GM12878 (cell line): ENCODE measurements at regions of chr16 and their contacts with region 1.

Region 1: DNA sequence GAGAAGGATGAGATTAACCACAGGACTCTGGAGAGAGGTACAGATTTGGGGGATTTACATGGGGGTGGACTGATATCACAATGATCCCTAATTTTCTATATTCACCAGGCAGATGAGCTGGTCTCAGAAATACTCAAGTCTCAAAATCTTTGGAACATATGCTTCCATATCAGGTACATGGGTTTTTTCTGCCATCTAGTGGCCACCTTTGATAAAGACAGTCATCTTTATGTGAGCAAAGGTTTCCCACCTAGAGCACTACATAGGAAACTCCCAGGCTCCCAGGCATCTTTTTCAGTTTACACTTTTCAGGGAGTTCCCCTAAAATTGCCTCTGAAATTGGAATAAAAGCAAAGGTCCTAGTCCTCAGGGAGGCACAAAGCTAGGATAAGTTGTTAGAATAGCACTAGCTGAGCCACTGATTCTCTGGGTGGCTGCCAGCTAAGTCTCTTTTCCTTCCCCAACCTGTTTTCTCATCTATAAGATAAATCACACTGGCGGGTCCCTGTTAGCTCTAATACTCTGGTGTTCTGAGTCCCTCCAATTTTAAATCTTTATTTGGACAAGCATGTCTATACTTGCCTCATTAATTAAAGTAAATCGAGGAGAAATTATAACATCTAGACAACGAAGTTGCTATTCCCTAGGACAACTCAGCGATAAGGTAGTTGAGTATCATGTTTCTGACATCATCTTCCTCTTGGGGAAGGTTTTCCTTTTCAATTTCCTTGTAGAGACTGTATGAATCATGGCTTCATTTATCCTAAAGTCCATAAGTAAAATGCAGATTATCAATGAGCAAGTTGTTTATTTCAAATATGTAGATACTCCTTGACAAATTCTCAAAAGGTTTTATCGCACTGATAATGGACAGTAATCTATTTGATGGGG is 19.0 kb upstream of the MON1B start:
- DNase-seq: no peak
- ATAC-seq: peak; percentile 89
- H3K4me3 ChIP-seq: no peak overlapping the region
- H3K27ac ChIP-seq: no peak overlapping the region
- H3K4me1 ChIP-seq: no peaks in the 10 kb centered on the region
- H3K27me3 ChIP-seq: no peaks in the 10 kb centered on the region
- CTCF ChIP-seq: peak; percentile 54 to 71 (median 68)
- EP300 ChIP-seq: no peak
- POLR2A ChIP-seq: no peak
- RAD21 ChIP-seq: peak; percentile 81

Region 2: GRCh38 chr16:76278980-76279379 is 893.0 kb before region 1 on chr16:
- CTCF ChIA-PET with region 1: interaction called, 21 read pairs
- POLR2A ChIA-PET with region 1: no interaction called
- RAD21 ChIA-PET with region 1: interaction called, 4 read pairs
- SMC1A ChIA-PET with region 1: interaction called, 8 read pairs
- in situ Hi-C with region 1: no loop called
- intact Hi-C with region 1: loop called (anchors 10 kb)
- DNase-seq: no peak
- ATAC-seq: peak; percentile 77
- H3K4me3 ChIP-seq: no peak overlapping the region
- H3K27ac ChIP-seq: no peak overlapping the region
- H3K4me1 ChIP-seq: no peaks in the 10 kb centered on the region
- H3K27me3 ChIP-seq: no peaks in the 10 kb centered on the region
- CTCF ChIP-seq: peak; percentile 25 to 55 (median 31); a peak in 4 of 6 replicates
- EP300 ChIP-seq: no peak
- POLR2A ChIP-seq: no peak
- RAD21 ChIP-seq: peak; percentile 65

Region 3: GRCh38 chr16:76668207-76668725 is 503.7 kb before region 1 on chr16:
- CTCF ChIA-PET with region 1: interaction called, 6 read pairs
- POLR2A ChIA-PET with region 1: no interaction called
- RAD21 ChIA-PET with region 1: no interaction called
- SMC1A ChIA-PET with region 1: no interaction called
- in situ Hi-C with region 1: loop called (anchors 10 kb)
- intact Hi-C with region 1: loop called (anchors 5 kb)
- DNase-seq: no peak
- ATAC-seq: peak; percentile 55; the same call in 2 of the 3 replicates
- H3K4me3 ChIP-seq: no peak overlapping the region
- H3K27ac ChIP-seq: no peak overlapping the region
- H3K4me1 ChIP-seq: no peaks in the 10 kb centered on the region
- H3K27me3 ChIP-seq: no peaks in the 10 kb centered on the region
- CTCF ChIP-seq: peak in 1 of 3 experiments; percentile 9; a peak in 1 of 6 replicates
- EP300 ChIP-seq: no peak
- POLR2A ChIP-seq: no peak
- RAD21 ChIP-seq: no peak

Region 4: DNA sequence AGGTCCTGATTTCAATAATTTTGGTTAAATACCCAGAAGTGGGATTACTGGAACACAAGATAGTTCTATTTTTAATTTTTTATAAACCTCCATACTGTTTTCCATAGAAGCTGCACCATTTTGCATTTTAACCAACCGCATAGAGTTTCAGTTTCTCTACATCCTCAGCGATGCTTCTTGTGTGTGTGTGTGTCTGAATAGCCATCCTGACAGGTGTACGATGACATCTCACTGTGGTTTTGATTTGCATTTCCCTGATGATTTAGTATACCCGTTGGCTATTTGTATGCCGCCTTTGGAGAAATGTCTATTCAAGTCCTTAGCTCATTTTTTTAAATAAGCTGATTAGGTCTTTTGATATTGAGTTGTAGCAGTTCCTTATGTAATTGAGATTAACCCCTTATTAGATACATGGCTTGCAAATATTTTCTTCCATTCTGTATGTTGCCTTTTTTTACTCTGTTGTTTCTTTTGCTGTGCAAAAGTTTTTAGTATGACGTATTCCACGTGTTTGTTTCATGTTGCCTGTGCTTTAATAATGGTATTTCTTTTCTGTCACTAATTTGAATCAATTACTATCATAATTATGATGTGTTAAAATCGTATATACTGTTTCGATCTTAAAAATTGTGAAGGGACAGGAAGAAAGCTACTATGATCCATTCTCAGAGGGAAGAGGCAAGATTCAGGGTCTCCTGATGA is 208.2 kb before region 1 on chr16:
- CTCF ChIA-PET with region 1: no interaction called
- POLR2A ChIA-PET with region 1: no interaction called
- RAD21 ChIA-PET with region 1: no interaction called
- SMC1A ChIA-PET with region 1: no interaction called
- in situ Hi-C with region 1: no loop called
- intact Hi-C with region 1: no loop called
- DNase-seq: no peak
- ATAC-seq: peak; percentile 31; the same call in 2 of the 3 replicates
- H3K4me3 ChIP-seq: no peak overlapping the region
- H3K27ac ChIP-seq: no peak overlapping the region
- H3K4me1 ChIP-seq: no peaks in the 10 kb centered on the region
- H3K27me3 ChIP-seq: no peaks in the 10 kb centered on the region
- CTCF ChIP-seq: no peak
- EP300 ChIP-seq: no peak
- POLR2A ChIP-seq: no peak
- RAD21 ChIP-seq: no peak

Region 5: GRCh38 chr16:77009453-77009852 is 162.5 kb before region 1 on chr16:
- CTCF ChIA-PET with region 1: no interaction called
- POLR2A ChIA-PET with region 1: no interaction called
- RAD21 ChIA-PET with region 1: no interaction called
- SMC1A ChIA-PET with region 1: no interaction called
- in situ Hi-C with region 1: no loop called
- intact Hi-C with region 1: no loop called
- DNase-seq: no peak
- ATAC-seq: no peak
- H3K4me3 ChIP-seq: no peak overlapping the region
- H3K27ac ChIP-seq: no peak overlapping the region
- H3K4me1 ChIP-seq: no peaks in the 10 kb centered on the region
- H3K27me3 ChIP-seq: no peaks in the 10 kb centered on the region; a peak in 1 of 4 replicates
- CTCF ChIP-seq: no peak
- EP300 ChIP-seq: no peak
- POLR2A ChIP-seq: no peak
- RAD21 ChIP-seq: no peak

Region 6: DNA sequence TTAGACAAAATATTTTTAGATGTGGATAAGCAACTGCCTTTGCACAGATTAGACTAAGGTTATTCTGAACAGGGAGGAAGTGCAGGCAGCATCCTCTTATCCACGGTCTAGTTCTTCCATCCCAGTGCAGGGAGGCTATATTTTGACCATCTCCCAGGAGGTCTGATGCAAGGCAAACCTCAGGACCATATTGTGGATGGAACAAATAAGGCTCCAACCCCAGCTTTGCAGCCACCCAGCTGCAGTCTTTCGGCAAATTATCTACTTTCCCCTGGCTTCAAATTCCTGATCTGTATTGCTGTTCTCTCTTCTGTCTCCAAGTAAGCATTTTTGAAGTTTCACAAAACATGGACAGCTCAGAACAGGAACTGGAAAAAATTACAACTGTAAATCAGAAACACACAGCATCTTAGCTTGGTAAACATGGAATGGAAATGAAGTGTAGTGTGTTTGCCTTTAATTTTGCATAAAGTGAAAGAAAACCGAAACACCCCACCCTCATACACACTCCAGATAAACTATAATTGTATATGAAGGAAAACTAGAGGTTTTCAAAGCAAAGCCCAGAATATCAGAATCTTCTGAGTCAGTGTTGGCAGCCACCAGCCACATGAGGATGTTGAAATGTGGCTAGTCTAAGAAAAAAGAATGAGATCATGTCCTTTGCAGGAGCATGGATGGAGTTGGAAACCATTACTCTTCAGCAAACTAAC is 14.5 kb before region 1 on chr16:
- CTCF ChIA-PET with region 1: interaction called, 18 read pairs
- POLR2A ChIA-PET with region 1: no interaction called
- RAD21 ChIA-PET with region 1: interaction called, 3 read pairs
- SMC1A ChIA-PET with region 1: interaction called, 9 read pairs
- in situ Hi-C with region 1: no loop called
- intact Hi-C with region 1: no loop called
- DNase-seq: no peak
- ATAC-seq: no peak
- H3K4me3 ChIP-seq: no peak overlapping the region
- H3K27ac ChIP-seq: no peak overlapping the region
- H3K4me1 ChIP-seq: no peaks in the 10 kb centered on the region
- H3K27me3 ChIP-seq: no peaks in the 10 kb centered on the region; a peak in 1 of 4 replicates
- CTCF ChIP-seq: no peak
- EP300 ChIP-seq: no peak
- POLR2A ChIP-seq: no peak
- RAD21 ChIP-seq: no peak

Region 7: GRCh38 chr16:77190478-77191258 is 18.7 kb after region 1 on chr16 and contains the start of gene MON1B:
- CTCF ChIA-PET with region 1: interaction called, 17 read pairs
- POLR2A ChIA-PET with region 1: no interaction called
- RAD21 ChIA-PET with region 1: no interaction called
- SMC1A ChIA-PET with region 1: interaction called, 3 read pairs
- in situ Hi-C with region 1: no loop called
- intact Hi-C with region 1: no loop called
- DNase-seq: peak; percentile 96
- ATAC-seq: peak; percentile 98
- H3K4me3 ChIP-seq: peak within 1 kb of the TSS; percentile 99
- H3K27ac ChIP-seq: peak within 1 kb of the TSS; percentile 87
- H3K4me1 ChIP-seq: no peaks in the 10 kb centered on the region; the same call in 1 of the 2 replicates
- H3K27me3 ChIP-seq: no peaks in the 10 kb centered on the region
- CTCF ChIP-seq: no peak
- EP300 ChIP-seq: 0 out of 4 replicates have a peak, but pooled peaks of 1 of the 2 experiments have one; percentile 10
- POLR2A ChIP-seq: peak; percentile 93
- RAD21 ChIP-seq: no peak
- polyA plus RNA-seq, gene MON1B: 5.7 to 7.6 TPM